ENCODE measurements at regions of chr12 and their contacts with region 1.

Region 1: DNA sequence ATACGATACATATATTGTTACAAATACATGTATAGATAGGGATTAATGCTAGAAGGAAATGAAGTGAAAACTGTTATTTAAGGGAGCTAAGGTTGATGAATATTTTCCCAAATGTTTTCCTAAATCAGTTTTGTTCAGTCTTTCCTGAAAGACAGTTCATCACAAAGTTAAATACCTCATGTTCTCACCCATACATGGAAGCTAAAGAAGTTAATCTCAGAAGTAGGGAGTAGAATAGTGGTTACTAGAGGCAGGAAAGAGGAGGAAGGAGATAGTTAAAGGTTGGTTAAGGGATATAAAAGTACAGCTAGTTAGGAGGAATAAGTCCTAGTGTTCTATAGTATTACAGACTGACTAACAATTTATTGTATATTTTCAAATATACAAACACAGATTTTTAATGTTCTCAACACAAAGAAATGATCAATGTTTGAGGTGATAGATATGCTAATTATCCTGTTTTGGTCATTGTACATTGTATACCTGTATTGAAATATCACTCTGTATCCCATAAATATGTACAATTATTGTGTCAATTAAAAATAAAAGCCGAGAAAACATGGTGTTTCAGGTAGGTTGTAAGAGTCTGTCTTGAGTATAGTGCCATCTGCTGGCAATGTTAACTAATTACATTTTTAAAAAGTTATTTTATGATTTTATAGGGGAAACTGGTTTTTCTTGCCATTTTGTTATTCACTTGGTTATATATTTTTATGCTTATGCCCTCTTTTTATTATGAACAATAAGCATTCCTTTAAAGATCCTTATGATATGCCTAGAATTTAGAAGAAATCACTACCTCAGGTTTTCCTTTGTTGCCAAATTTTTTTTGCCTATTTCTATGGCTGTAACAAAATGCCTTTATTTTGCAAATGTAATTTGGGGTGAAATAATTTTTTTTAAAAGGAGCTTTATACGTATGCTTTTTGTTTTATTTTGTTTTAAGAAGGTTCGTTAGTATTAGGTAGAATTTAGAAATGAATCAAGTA is 26.9 kb downstream of the ZDHHC17 start:
- DNase-seq: no peak
- H3K4me3 Mint-ChIP-seq: no peak overlapping the region
- H3K27ac Mint-ChIP-seq: no peak overlapping the region
- H3K4me1 Mint-ChIP-seq: no peaks in the 10 kb centered on the region
- H3K27me3 Mint-ChIP-seq: no peaks in the 10 kb centered on the region

Region 2: DNA sequence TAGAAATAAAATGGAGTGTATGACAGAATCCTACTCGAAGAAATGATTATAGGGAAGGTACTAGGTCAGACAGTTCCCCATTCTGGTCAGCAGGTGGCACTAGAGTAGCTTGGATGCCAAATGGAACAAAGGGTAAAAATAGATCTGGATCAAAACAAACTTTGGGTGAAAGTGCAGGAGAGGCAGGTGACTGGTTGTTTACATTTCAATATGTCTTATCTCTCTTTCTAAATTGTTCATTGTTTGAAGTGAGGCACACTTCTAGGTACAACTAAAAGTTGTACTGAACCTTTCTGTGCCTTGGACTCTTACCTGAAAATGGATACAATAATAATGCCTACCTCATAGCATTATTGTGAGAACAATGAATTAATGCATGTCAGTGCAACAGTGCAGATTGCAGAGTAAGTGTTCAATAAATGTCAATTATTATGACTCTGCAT is 169.3 kb before region 1 on chr12:
- CTCF ChIA-PET with region 1: interaction called, 55 read pairs
- POLR2A ChIA-PET with region 1: no interaction called
- DNase-seq: peak; percentile 69
- H3K4me3 Mint-ChIP-seq: no peak overlapping the region
- H3K27ac Mint-ChIP-seq: no peak overlapping the region
- H3K4me1 Mint-ChIP-seq: peaks cover 5% of the 10 kb centered on the region
- H3K27me3 Mint-ChIP-seq: peaks cover 6% of the 10 kb centered on the region